Right ventricle myocardium inferior (tissue), 1 donor: ENCODE measurements at regions of chr1 and their contacts with region 1.

Region 1: DNA sequence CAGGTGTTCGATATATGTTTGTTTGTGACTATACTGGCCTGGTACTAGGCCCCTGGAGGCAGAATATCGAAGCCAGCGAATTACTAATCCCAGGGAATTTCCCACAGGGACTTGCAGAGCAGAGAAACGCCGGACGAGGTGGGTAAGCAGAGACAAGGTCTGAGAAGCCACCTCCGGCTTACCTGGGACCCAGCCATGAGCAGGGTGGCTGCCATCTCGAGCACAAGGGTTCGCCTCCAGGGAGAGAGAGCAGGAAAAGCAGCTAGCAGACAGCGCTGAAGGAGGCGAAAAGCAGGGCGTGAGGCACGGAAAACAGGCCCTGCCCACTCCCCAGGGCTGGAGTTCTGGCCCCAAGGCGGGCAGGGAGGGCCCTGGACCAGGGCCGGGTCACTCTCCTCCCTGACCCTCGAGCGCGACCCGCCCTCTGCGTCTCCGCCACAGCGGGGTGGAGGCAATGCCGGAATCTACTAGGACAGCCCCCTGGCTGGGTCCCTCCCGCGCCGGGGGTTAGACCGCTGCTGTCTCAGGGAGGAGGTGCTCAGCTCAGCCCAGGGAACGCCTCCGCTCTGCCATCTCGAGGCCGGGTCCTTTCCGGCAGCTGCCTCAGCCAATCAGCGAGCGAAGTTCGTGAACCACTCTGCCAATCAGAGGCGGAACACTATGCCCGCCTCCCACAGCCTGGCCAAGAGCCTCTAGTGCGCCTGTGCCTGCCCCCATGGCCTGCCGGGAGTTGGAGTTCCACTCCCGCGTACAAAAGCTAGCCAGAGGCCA is 1.7 kb downstream of the ZNF436 start:
- DNase-seq: peak; percentile 99
- ATAC-seq: peak; percentile 92

Region 2: GRCh38 chr1:23384302-23385058 is 16.5 kb after region 1 on chr1:
- intact Hi-C with region 1: no loop called
- DNase-seq: no peak
- ATAC-seq: no peak

Region 3: DNA sequence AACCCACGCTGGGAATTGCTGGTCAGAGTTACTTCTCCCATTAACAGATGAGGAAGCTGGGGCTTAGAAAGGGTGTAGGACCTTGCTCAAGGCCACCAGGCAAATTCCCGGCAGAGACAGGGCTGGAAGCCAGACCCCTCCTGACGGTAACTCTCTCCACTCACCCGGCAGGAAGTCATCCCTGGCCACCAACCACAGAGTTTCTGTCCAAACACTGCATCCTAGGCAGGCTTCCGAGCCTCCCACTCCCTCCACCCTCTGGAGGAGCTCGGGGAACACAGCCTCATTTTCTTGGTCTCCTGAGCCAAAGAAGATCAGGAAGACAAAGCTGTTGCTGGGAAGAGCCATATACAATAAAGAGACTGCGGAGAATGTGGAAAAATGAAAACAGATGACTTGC is 26.7 kb after region 1 on chr1:
- intact Hi-C with region 1: loop called (anchors 2 kb)
- DNase-seq: peak; percentile 88
- ATAC-seq: peak; percentile 91

Region 4: GRCh38 chr1:23403735-23404486 is 35.9 kb after region 1 on chr1:
- intact Hi-C with region 1: loop called (anchors 2 kb)
- DNase-seq: peak; percentile 89
- ATAC-seq: peak; percentile 84

Region 5: GRCh38 chr1:23478896-23479665 is 111.1 kb after region 1 on chr1:
- intact Hi-C with region 1: loop called (anchors 5 kb)
- DNase-seq: peak; percentile 83
- ATAC-seq: peak; percentile 89